ENCODE measurements at regions of chr3 and their contacts with region 1.

Region 1: GRCh38 chr3:113546414-113546893 is 14.1 kb downstream of the SIDT1 start:
- DNase-seq: no peak
- H3K4me3 ChIP-seq: no peak overlapping the region
- H3K27ac ChIP-seq: no peak overlapping the region
- H3K4me1 ChIP-seq: peaks cover 10% of the 10 kb centered on the region
- CTCF ChIP-seq: no peak

Region 2: DNA sequence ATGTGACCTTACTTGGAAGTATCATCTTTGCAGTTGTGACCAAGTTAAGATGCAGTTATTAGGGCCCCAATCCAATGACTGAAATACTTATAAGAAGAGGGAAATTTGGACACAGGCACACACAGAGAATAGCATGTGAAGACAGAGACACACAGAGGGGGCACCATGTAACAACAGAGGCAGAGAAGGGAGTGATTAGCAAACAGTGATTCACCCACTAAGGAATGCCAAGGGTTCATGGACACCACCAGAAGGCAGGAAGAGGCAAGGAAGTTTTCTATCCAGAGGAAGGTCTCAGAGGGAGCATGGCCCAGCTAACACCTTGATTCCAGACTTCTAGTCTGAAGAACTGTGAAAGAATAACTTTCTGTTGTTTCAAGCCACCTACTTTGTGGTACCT is 10.9 kb after region 1 on chr3:
- CTCF ChIA-PET with region 1: no interaction called
- POLR2A ChIA-PET with region 1: no interaction called
- intact Hi-C with region 1: no loop called
- DNase-seq: no peak
- H3K4me3 ChIP-seq: no peak overlapping the region
- H3K27ac ChIP-seq: no peak overlapping the region
- H3K4me1 ChIP-seq: no peaks in the 10 kb centered on the region
- CTCF ChIP-seq: no peak

Region 3: GRCh38 chr3:114649331-114649730 is 1102.9 kb after region 1 on chr3:
- CTCF ChIA-PET with region 1: no interaction called
- POLR2A ChIA-PET with region 1: interaction called, 10 read pairs
- intact Hi-C with region 1: no loop called
- DNase-seq: no peak
- H3K4me3 ChIP-seq: no peak overlapping the region
- H3K27ac ChIP-seq: no peak overlapping the region
- H3K4me1 ChIP-seq: no peaks in the 10 kb centered on the region
- CTCF ChIP-seq: no peak